ENCODE measurements at regions of chr18 and their contacts with region 1.

Region 1: DNA sequence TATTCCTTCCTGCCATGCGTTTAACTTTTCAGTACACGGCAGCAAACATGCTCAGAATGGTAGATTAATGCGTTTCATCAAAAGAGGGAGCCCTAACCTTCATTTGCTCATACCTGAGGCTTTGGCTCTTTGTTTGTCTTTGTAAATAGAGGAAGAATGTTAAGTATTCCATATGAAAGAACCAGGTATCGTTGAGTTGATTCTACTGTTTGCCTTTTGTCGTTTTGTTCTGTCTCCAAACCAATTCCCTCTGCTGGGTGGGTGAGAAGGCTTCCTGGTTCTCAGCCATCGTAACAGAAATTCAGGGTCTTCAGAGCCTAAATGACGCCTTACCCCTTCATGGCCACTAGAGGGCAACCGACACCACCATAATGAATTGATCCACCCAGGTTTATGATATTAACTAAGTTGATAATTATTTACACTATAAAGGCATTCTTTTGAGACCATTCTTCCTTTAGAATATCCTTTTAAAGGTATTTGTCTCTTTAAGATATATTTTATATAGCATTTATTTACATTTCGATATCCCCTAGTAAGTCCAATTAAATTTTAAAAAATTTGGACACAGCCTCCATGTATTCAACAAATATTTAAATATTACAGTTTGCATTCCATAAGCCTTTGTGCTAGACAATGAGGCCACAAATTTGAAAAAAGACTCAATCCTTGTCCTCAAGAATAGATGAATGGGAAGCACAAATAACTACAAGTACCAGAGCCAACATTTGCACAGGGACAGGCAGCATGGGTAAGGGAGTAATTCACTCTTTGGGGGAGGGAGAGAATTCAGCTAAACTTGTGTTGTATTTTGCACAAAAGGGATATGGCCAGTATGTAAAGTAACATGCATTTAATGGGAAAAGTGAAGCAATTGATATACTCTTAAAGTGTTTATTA is 48.1 kb downstream of the TIMM21 start:
- DNase-seq: no peak
- H3K4me3 ChIP-seq: peak overlapping the region; percentile 7
- CTCF ChIP-seq: peak; percentile 79

Region 2: GRCh38 chr18:74147779-74148542 is 48.5 kb before region 1 on chr18 and contains the starts of genes FBXO15 and TIMM21:
- CTCF ChIA-PET with region 1: no interaction called
- POLR2A ChIA-PET with region 1: no interaction called
- DNase-seq: peak; percentile 79
- H3K4me3 ChIP-seq: peak within 1 kb of the TSS; percentile 98
- CTCF ChIP-seq: no peak

Region 3: DNA sequence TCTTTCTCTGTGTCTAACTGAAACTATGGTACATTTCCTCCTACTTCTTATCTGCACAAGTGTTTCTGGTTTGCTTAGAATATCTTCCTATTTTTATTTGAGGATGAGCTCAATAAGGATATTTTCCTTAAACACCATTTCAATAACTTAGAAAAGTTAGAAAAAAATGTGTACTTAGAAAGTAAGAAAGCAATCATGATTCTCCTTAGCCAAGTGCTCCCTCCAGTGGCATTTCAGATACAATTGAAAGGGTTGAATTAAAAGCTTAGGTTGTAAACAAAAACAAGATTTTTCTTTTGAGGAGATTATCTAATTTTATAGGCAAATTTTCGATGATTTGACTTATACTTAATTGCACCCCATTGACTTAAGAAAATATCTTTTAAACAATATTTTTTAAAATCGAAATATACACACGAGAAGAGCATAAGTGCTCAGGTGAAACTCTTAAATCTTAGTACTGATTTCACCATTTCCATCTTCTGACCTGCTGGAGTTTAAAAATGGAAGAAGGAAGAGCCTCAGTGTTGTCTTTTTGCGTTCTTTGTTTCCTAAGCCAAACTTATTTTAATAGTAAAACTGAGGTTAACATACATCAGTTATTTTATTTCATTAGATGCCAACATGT is 146.1 kb after region 1 on chr18:
- CTCF ChIA-PET with region 1: interaction called, 42 read pairs
- POLR2A ChIA-PET with region 1: no interaction called
- DNase-seq: no peak
- H3K4me3 ChIP-seq: no peak overlapping the region
- CTCF ChIP-seq: peak; percentile 17

Region 4: GRCh38 chr18:74495581-74496507 is 299.4 kb after region 1 on chr18 and contains the start of gene CNDP2:
- CTCF ChIA-PET with region 1: interaction called, 12 read pairs
- POLR2A ChIA-PET with region 1: no interaction called
- DNase-seq: peak; percentile 75
- H3K4me3 ChIP-seq: peak within 1 kb of the TSS; percentile 88
- CTCF ChIP-seq: no peak